Posterior vena cava (tissue), 2 donors: ENCODE measurements at regions of chr17 and their contacts with region 1.

Region 1: DNA sequence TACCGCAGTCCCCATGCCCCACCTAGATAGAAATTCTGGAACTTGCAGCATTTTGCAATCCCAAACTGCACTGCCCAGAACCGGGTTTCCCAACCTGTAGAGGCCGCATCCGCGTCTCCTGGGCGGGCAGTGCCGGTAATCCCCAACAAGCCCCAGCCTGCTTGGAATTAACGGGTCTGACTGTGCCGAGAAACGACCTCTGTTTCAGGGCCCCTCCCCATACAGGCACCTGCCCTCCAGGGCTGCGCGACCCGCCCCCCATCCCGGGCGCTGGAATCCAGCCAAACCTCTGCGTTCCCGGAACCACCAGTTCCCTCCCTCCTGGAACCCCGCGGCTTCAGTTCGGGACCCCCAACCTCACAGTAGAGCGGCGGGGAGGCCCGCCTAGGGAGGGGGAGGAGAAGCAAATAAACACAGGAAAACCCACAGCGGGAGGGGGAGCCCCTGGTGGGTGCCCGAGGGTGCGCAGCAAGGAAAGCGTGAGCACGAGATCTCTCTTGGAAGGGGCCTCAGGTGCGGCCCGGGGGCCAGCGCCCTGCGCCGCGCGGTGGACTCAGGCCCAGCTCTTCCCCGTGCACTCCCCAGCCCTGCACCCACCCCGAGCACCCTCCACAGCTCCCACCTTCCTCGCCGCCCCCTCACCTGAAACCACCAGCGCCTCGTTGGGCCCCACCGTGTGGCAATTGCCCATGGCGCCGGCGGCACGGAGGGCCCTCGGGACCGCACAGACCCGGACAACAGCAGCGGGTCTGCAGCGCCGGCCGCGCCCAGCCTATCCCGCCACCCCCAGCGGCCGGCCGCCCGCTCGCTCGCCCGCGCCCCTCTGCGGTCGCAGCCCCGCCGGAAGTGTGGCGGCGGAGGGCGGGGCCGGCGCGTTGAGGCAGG is at the start of gene FLOT2:
- DNase-seq: peak; percentile 91
- total RNA-seq, gene FLOT2: 99.0 to 101 TPM

Region 2: DNA sequence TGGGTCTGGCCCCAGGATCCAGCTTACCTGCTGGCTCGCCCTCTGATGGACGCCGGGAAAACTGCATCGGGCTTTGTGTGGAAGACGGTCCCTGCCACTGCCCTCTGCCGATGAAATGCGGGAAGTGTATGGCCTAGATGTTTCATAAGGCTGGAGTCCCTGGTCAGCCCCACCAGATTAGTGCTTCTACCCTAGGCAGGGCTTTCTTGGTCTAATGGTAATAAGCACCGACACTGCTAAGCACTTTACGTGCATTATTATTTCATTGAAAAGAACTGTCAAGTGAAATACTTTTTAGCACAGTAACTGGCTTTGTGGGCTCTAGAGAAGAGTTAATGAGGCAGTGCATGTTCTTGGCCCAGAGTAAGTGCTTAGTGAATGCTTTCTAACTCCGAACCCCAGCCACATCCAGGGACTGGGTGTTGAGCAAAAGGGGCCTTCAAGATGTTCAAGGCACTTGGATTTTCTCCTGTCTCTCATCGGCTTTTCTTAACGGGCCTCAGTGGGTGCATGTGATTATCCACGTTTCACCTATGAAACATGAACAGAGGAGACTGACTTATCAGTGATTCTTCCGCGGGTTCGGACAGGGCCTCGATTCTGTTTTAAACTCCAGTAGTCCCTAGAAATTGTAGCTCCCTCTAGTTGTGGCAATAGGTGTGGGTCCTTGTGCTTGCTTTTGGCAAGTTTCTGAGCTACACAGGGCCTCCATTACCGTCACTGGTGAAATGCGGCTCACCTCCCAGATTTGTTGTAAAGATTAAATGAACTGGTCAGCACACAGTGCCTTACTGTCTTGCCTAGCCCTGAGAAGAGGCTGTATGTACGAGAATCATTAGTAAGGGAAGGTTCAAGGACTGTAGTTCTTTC is 146.7 kb before region 1 on chr17:
- intact Hi-C with region 1: loop called in 1 of 2 experiments (anchors 10 kb)
- DNase-seq: peak; percentile 97

Region 3: DNA sequence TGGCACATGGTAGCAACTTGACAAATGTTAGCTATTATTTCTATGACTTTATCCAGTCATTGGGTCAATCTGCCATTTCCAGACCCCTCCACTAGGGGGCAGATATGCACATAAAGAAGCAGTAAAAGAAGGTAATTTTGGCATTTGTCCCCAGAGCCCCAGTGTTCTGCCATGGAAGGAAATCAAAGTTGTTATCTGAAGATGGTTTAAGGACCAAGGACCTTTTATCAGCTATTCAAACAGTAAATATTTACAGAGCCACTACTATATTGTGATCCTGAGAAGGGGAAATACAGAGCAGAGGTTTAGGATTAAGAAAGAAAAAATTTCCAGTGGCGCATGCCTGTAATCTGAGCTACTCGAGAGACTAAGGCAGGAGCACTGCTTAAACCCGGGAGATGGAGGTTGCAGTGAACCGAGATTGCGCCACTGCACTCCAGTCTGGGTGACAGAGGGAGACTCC is 133.3 kb before region 1 on chr17:
- intact Hi-C with region 1: loop called (anchors 10 kb)
- DNase-seq: peak; percentile 78